Activated CD4-positive, alpha-beta T cell treated with anti-CD3 and anti-CD28 coated beads, Interleukin-2, amount 10 ng/mL, durations not matched to agents 24 days and 14 days (primary cell): ENCODE measurements at regions of chr4 and their contacts with region 1.

Region 1: GRCh38 chr4:78938868-78939666 is at the start of gene PAQR3:
- DNase-seq: peak; percentile 96
- H3K4me3 Mint-ChIP-seq: peak within 1 kb of the TSS; percentile 94
- H3K27ac Mint-ChIP-seq: peak within 1 kb of the TSS; percentile 85
- H3K4me1 Mint-ChIP-seq: peaks cover 37% of the 10 kb centered on the region
- H3K27me3 Mint-ChIP-seq: peaks cover 16% of the 10 kb centered on the region
- total RNA-seq, gene PAQR3: 14.1 and 14.9 TPM in 2 replicates

Region 2: DNA sequence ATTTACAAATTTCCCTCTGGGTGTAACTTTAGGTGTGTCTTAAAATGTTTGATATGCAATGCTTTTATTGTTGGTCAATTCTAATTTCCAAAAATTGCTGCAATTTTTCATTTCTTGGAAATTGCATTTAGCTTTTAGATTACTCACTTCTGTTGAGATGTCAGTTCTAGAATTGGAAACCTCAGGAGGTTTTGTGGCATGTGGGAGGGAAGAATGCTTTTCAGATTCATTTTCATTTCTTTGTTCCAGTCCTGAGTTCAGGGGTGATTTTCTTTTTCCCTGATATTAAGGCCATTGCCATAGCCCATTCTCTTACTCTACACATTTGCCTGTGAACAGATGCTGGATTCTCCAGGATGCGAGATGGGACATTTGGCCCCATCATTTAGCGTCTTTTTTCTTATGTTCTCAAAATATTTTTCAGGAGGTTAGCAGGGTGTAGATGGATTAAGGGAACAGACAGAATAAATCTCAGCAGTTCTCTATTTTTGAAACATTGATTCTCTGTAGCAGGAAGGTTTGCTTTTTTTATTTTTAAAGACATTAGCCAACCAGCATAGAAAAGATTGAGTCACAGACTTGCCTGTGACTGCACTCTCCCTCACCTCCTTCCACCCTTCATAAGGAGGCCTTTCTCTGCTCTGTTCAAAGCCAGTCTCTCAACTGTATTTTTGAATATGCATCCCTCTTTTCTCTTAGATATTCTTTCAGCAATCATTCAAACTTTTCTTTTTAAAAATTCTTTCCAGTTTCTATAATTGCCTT is 625.9 kb before region 1 on chr4:
- intact Hi-C with region 1: loop called (anchors 5 kb)
- DNase-seq: no peak
- H3K4me3 Mint-ChIP-seq: peak overlapping the region; percentile 38
- H3K27ac Mint-ChIP-seq: no peak overlapping the region
- H3K4me1 Mint-ChIP-seq: peaks cover 20% of the 10 kb centered on the region
- H3K27me3 Mint-ChIP-seq: peaks cover 5% of the 10 kb centered on the region

Region 3: DNA sequence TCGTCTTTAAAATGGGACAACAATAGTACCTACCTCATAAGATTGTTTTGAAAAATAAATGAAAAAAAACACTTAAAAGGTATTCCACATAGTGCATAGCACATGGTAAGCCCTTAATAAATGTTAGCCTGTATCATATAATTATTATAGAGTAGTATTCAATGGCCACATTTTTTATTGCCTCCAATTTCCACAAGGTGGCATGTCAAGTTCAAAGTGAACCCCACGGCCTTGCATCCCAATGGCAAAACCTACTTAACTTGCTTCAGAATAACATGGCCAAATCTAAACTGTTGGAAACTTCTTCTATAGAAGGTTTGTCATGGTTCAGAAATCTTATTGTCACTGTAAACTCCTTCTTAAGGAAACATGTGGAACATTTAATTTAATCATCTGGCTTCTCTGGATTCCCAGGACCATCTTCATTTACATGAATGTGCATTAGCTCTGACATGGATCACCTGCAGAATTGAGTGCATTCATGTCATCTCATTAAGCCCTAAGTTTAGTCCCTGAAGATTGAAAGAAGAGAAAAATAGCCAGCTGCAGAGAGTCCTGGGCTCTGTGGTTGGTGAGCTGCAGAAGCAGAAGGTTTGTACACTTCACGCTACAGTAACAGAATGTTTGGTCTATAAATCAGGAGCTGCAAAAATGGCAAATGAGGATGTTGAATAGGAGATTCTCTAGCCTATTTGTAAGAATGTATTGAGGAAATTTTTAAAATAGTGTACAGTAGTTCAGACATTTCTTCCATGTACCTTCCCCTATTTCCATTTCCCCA is 326.5 kb before region 1 on chr4:
- intact Hi-C with region 1: loop called (anchors 5 kb)
- DNase-seq: peak; percentile 66
- H3K4me3 Mint-ChIP-seq: no peak overlapping the region
- H3K27ac Mint-ChIP-seq: no peak overlapping the region
- H3K4me1 Mint-ChIP-seq: peaks cover 42% of the 10 kb centered on the region
- H3K27me3 Mint-ChIP-seq: peaks cover 2% of the 10 kb centered on the region

Region 4: GRCh38 chr4:78656968-78657445 is 282.1 kb before region 1 on chr4:
- intact Hi-C with region 1: loop called (anchors 5 kb)
- DNase-seq: peak; percentile 80
- H3K4me3 Mint-ChIP-seq: peak overlapping the region; percentile 61
- H3K27ac Mint-ChIP-seq: peak overlapping the region; percentile 65
- H3K4me1 Mint-ChIP-seq: peaks cover 38% of the 10 kb centered on the region
- H3K27me3 Mint-ChIP-seq: no peaks in the 10 kb centered on the region

Region 5: DNA sequence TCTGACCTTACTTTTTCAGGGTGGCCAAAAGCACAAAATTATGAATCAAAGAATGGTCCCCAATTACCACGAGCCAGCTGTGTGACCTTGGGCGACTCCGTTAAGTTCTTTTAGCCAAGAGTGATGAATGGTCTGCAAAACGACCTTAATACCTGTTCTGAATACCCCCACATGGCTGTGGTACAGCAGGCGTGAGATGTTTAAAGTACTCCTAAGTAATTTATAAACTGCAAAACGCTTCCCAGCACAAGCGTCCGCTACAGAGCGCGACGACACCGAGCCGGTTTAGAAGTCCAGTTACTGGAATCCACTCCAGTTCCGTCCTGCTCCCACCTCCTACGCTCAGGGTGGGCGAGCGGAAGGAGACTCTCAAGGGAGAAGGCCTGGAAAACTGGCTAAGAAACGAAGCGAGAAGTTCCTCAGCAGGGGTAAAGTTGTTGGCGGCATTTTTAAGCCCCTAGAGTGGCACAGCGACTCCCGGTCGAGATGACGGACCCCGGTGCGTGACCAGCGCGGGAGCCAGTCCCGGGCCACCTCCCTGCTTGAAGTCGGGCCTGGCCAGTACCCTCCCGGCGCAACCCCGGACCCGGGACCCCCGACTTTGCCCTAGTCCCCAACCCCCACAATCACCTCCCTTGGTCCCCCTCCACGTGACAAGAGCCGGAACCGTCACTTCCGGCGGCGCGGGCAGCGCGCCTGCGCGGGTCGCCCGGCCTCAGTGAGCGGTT is 163.6 kb before region 1 on chr4:
- intact Hi-C with region 1: loop called (anchors 2 kb)
- DNase-seq: peak; percentile 97
- H3K4me3 Mint-ChIP-seq: peak overlapping the region; percentile 93
- H3K27ac Mint-ChIP-seq: peak overlapping the region; percentile 98
- H3K4me1 Mint-ChIP-seq: peaks cover 34% of the 10 kb centered on the region
- H3K27me3 Mint-ChIP-seq: no peaks in the 10 kb centered on the region

Region 6: GRCh38 chr4:78923464-78924312 is 15.4 kb before region 1 on chr4:
- intact Hi-C with region 1: loop called (anchors 2 kb)
- DNase-seq: no peak
- H3K4me3 Mint-ChIP-seq: no peak overlapping the region
- H3K27ac Mint-ChIP-seq: no peak overlapping the region
- H3K4me1 Mint-ChIP-seq: peaks cover 7% of the 10 kb centered on the region
- H3K27me3 Mint-ChIP-seq: no peaks in the 10 kb centered on the region